CD14-positive monocyte (primary cell): ENCODE measurements at regions of chrX and their contacts with region 1.

Region 1: GRCh38 chrX:71254092-71254941 is at the start of gene ZMYM3:
- DNase-seq: peak; percentile 60 to 66 (median 62)
- H3K4me3 ChIP-seq: peak within 1 kb of the TSS; percentile 69 to 91 (median 90)
- H3K4me3 Mint-ChIP-seq: peak within 1 kb of the TSS; percentile 89
- H3K27ac ChIP-seq: peak within 1 kb of the TSS; percentile 36 to 74
- H3K27ac Mint-ChIP-seq: peak within 1 kb of the TSS; percentile 66 to 94 (median 83)
- H3K4me1 ChIP-seq: peaks cover 28 to 33% of the 10 kb centered on the region in 2 donors
- H3K4me1 Mint-ChIP-seq: peaks cover 36% of the 10 kb centered on the region
- H3K27me3 ChIP-seq: no peaks in the 10 kb centered on the region
- H3K27me3 Mint-ChIP-seq: peaks cover 0 to 10% (median 0%) of the 10 kb centered on the region in 3 donors
- CTCF ChIP-seq: no peak
- polyA plus RNA-seq, gene ZMYM3: 3.9 to 13.2 (median 4.8) TPM

Region 2: GRCh38 chrX:71198066-71198465 is 56.3 kb before region 1 on chrX:
- intact Hi-C with region 1: loop called in 1 of 2 experiments (anchors 10 kb)
- DNase-seq: peak; percentile 43 to 59 (median 52)
- H3K4me3 ChIP-seq: peak overlapping the region; percentile 54 to 80 (median 66)
- H3K4me3 Mint-ChIP-seq: peak overlapping the region; percentile 80 to 92
- H3K27ac ChIP-seq: peak overlapping the region; percentile 46 to 84
- H3K27ac Mint-ChIP-seq: peak overlapping the region; percentile 68 to 94 (median 85)
- H3K4me1 ChIP-seq: peaks cover 16 to 22% of the 10 kb centered on the region in 2 donors
- H3K4me1 Mint-ChIP-seq: peaks cover 27% of the 10 kb centered on the region
- H3K27me3 ChIP-seq: no peaks in the 10 kb centered on the region
- H3K27me3 Mint-ChIP-seq: no peaks in the 10 kb centered on the region
- CTCF ChIP-seq: no peak